ENCODE measurements at regions of chr2 and their contacts with region 1.

Region 1: DNA sequence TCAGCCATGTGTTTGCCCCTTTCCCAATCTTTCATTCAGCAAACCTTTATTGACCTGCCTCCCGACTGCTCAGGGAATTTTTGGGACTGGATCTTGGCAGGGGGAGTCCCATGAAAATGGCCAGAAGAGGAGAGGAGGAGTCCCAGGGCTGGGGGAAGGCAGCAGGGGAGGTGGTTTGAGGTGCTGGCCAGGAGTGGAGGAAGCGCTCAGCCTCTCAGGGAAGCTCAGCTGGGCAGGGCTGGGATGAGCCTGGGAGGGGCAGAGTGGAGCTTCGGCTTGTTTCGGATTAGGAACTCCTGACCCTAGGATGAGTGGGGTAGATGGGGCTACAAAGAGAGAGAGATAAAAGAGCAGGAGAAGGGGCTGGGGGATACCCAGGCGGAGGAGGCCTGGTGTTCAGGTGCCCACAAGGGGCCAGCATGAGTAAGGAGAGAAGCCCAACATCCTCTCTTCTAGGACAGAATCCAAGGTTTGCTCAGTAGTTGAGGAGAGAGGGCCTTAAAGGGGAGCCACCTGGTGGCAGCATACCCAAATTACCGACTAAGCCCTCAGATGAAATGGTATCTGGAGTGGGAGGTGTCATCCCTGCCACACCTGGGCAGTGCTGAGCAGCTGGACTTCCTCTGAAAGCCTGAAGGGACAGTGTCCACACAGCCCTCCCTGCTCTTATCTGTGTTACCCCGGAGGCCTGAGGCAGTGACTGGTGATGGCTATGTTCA is 91.1 kb downstream of the INHBB start:
- DNase-seq: peak in 1 of 2 donors; percentile 35
- ATAC-seq: peak in 1 of 2 donors; percentile 53
- H3K4me3 ChIP-seq: no peak overlapping the region
- H3K27ac ChIP-seq: peak overlapping the region in 2 of 4 donors; percentile 10 to 22
- H3K4me1 ChIP-seq: peaks cover 3 to 4% of the 10 kb centered on the region in 2 donors
- H3K27me3 ChIP-seq: peaks cover 9 to 22% (median 12%) of the 10 kb centered on the region in 3 donors
- CTCF ChIP-seq: peak in 4 of 5 experiments; percentile 18 to 49 (median 30)
- POLR2A ChIP-seq: no peak

Region 2: GRCh38 chr2:120223034-120223912 is 213.8 kb before region 1 on chr2 and contains the start of gene TMEM185B:
- in situ Hi-C with region 1: no loop called
- intact Hi-C with region 1: loop called (anchors 10 kb)
- DNase-seq: peak; percentile 74 to 86
- ATAC-seq: peak; percentile 96 to 97
- H3K4me3 ChIP-seq: peak within 1 kb of the TSS; percentile 70 to 78 (median 70)
- H3K27ac ChIP-seq: peak within 1 kb of the TSS; percentile 86 to 96 (median 90)
- H3K4me1 ChIP-seq: peaks cover 25% of the 10 kb centered on the region in 2 donors
- H3K27me3 ChIP-seq: no peaks in the 10 kb centered on the region
- CTCF ChIP-seq: peak in 3 of 5 experiments; percentile 20 to 41 (median 26)
- POLR2A ChIP-seq: peak; percentile 63 to 71
- total RNA-seq, gene TMEM185B: 10.8 to 23.5 (median 15.4) TPM

Measured in gastrocnemius medialis (tissue), 4 donors.